Testis (tissue), 5 donors: ENCODE measurements at regions of chr12 and their contacts with region 1.

Region 1: GRCh38 chr12:15522565-15523187 is 200.4 kb downstream of the PTPRO start:
- DNase-seq: no peak
- H3K4me3 ChIP-seq: no peak overlapping the region
- H3K27ac ChIP-seq: no peak overlapping the region
- H3K4me1 ChIP-seq: no peaks in the 10 kb centered on the region
- H3K27me3 ChIP-seq: no peaks in the 10 kb centered on the region
- CTCF ChIP-seq: peak; percentile 36 to 45 (median 40)
- POLR2A ChIP-seq: no peak

Region 2: DNA sequence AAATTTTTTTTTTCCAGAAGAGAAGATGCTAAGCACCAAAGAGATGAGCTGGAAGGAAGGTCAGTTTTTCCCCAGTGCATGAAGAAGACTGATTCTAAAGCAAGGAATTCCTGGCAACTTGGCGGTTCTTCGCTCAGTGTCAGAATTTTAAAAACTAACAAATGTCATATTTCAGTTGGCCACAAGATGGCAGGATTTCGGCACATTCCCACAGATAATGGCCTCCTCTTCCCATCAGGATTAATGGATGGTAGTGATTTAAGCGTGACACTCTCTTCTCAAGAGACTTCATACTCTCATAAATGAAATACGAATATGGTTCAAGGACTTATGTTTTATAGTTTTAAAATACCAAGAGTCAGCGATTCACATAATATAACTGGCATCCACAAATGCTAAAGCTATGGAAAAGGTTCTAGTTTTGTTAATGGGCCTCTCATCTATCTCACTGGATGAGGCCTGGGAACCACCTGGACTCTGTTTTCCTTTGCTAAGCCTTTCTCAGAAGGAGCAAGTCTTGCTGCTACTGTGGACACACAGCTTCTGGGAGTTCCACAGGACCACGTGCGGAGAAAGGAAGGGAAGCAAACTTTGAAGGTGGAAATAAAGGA is 246.5 kb before region 1 on chr12:
- intact Hi-C with region 1: loop called (anchors 10 kb)
- DNase-seq: peak; percentile 59
- H3K4me3 ChIP-seq: no peak overlapping the region
- H3K27ac ChIP-seq: no peak overlapping the region
- H3K4me1 ChIP-seq: peaks cover 20% of the 10 kb centered on the region
- H3K27me3 ChIP-seq: no peaks in the 10 kb centered on the region
- CTCF ChIP-seq: peak; percentile 73 to 85 (median 79)
- POLR2A ChIP-seq: no peak

Region 3: GRCh38 chr12:15423629-15424028 is 99.0 kb before region 1 on chr12:
- intact Hi-C with region 1: no loop called
- DNase-seq: no peak
- H3K4me3 ChIP-seq: no peak overlapping the region
- H3K27ac ChIP-seq: no peak overlapping the region
- H3K4me1 ChIP-seq: no peaks in the 10 kb centered on the region
- H3K27me3 ChIP-seq: no peaks in the 10 kb centered on the region
- CTCF ChIP-seq: no peak
- POLR2A ChIP-seq: no peak

Region 4: DNA sequence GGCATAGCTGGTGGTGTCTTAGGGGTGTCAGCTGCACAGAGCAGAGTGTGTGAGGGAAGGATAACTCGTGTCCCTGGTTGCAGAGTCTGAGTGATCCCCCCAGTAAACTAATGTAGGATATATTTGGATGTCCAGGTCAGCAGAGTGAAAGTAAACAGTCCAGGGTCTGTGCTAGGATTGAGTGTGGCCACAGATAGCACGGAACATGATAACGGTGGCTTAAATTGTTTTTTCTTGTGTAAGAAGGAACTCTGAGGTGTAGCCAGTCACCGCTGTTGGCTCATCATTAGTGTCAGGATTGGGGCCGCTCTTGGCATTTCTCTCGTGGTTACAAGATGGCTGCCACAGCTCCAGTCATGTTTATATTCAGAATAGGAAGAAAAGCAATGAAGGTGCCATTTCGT is 485.7 kb after region 1 on chr12:
- intact Hi-C with region 1: no loop called
- DNase-seq: no peak
- H3K4me3 ChIP-seq: no peak overlapping the region
- H3K27ac ChIP-seq: no peak overlapping the region
- H3K4me1 ChIP-seq: no peaks in the 10 kb centered on the region
- H3K27me3 ChIP-seq: no peaks in the 10 kb centered on the region
- CTCF ChIP-seq: no peak
- POLR2A ChIP-seq: no peak